ENCODE measurements at regions of chr4 and their contacts with region 1.

Region 1: DNA sequence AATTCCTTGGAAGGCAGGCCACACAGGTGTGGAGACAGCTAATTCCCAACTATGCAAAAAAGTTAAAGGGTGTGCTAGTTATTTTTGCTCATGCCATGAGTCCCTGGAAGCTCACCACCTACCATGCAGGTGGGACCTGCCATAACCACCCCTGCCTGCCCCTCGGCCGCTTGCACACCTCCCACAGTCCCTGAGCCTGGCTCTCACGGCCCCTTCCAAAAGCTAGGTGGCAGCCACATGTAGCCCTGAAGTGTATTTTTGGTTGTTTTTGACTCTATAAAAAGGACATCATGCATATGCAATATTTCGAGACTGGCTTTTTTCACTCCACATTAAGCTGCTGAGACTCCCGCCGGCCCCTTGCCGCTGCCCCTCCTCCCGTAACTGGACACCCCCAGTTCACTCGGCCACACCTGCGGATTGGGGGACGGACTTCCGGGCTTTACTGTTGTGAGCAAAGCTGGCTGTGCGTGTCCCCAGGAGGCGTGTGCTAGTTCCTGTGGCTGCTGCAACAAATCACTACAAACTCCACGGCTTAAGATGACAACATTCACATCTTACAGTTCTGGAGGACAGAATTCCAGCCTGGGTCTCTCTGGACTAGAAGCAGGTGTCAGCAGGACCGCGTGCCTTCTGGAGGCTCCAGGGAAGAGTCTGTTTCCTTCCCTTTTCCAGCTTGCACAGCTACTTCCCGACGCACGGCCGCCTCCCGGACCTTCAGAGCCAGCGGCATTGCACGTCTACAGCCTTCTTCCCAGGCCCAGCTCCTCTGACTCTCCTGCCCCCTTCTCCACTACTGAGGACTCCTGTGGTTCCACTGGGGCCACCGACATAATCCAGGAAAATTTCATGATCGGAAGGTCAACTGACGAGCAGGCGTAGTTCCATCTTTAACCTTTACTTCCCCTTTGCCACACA is 24.8 kb downstream of the ZFYVE28 start:
- DNase-seq: no peak
- ATAC-seq: peak; percentile 72
- H3K4me3 Mint-ChIP-seq: peak overlapping the region; percentile 81
- H3K27ac Mint-ChIP-seq: peak overlapping the region; percentile 73
- H3K4me1 Mint-ChIP-seq: peaks cover 32% of the 10 kb centered on the region
- H3K27me3 Mint-ChIP-seq: peaks cover 11% of the 10 kb centered on the region
- CTCF ChIP-seq: no peak

Region 2: GRCh38 chr4:2412885-2413716 is 19.5 kb after region 1 on chr4:
- CTCF ChIA-PET with region 1: no interaction called
- POLR2A ChIA-PET with region 1: interaction called, 22 read pairs
- intact Hi-C with region 1: loop called (anchors 2 kb)
- DNase-seq: peak; percentile 55
- ATAC-seq: peak; percentile 70
- H3K4me3 Mint-ChIP-seq: peak overlapping the region; percentile 81
- H3K27ac Mint-ChIP-seq: peak overlapping the region; percentile 73
- H3K4me1 Mint-ChIP-seq: peaks cover 38% of the 10 kb centered on the region
- H3K27me3 Mint-ChIP-seq: peaks cover 13% of the 10 kb centered on the region
- CTCF ChIP-seq: no peak